CD8-positive, alpha-beta memory T cell (primary cell): ENCODE measurements at regions of chr1 and their contacts with region 1.

Region 1: GRCh38 chr1:89632657-89633247 is at the start of gene LRRC8C:
- DNase-seq: peak; percentile 78 to 95 (median 90)
- H3K4me3 ChIP-seq: peak within 1 kb of the TSS; percentile 74
- H3K4me3 Mint-ChIP-seq: peak within 1 kb of the TSS; percentile 90 to 99 (median 96)
- H3K27ac ChIP-seq: peak within 1 kb of the TSS; percentile 86
- H3K27ac Mint-ChIP-seq: peak within 1 kb of the TSS; percentile 95 to 99 (median 98)
- H3K4me1 ChIP-seq: peaks cover 77% of the 10 kb centered on the region
- H3K4me1 Mint-ChIP-seq: peaks cover 72 to 85% (median 83%) of the 10 kb centered on the region in 3 donors
- H3K27me3 ChIP-seq: no peaks in the 10 kb centered on the region
- H3K27me3 Mint-ChIP-seq: peaks cover 0 to 3% of the 10 kb centered on the region in 2 donors
- total RNA-seq, gene LRRC8C: 61.4 to 63.5 TPM

Region 2: GRCh38 chr1:89598450-89599331 is 34.1 kb before region 1 on chr1:
- CTCF ChIA-PET with region 1: interaction called, 403 read pairs
- POLR2A ChIA-PET with region 1: interaction called, 3 read pairs
- DNase-seq: peak in 2 of 5 donors; percentile 28 to 38
- H3K4me3 ChIP-seq: no peak overlapping the region
- H3K4me3 Mint-ChIP-seq: no peak overlapping the region
- H3K27ac ChIP-seq: no peak overlapping the region
- H3K27ac Mint-ChIP-seq: peak overlapping the region in 6 of 8 donors; percentile 6 to 72 (median 22)
- H3K4me1 ChIP-seq: peaks cover 43% of the 10 kb centered on the region
- H3K4me1 Mint-ChIP-seq: peaks cover 48 to 80% (median 75%) of the 10 kb centered on the region in 3 donors
- H3K27me3 ChIP-seq: no peaks in the 10 kb centered on the region
- H3K27me3 Mint-ChIP-seq: no peaks in the 10 kb centered on the region

Region 3: DNA sequence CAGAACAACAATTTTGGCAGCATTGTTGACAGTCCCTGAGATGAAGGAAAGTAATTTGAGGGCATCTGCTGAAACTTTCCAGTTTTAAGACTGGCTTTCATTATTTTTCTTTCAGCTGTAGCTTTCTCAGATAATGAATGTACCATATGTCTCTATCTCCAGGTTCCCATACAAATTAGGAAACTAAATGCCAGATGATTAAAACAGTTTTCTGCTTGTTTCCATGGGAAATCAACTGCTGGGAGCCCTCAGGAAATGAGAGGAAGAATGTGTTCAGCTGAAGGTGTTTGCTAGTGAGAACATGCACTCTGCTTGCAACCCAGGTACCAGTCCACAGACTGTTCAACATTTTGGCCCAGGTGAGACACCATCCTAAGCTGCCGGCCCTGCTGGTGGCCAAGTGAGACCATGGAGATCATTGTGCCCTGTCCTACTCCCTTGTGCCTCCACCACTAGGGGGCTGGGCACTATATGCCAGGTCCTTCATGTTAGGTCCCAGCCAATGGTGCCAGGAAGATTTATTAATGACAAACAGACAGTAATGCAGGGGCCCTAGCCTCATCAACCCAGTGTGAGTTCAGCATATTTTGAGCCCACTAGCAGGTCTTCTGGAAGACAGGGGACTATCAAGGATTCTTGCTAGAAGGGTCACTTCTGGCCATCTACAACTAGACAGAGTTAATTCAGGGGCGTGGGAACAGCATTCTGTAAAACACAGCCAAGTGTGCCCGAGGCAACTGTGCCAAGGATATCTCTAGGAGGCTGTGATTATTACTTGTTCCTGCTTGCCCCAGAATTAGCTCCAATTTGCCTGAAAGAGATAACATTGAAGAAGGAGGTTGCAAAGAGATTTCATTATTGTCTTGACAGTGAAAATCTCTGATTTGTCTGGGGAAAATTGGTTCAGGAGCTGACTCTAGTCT is 16.8 kb before region 1 on chr1:
- CTCF ChIA-PET with region 1: interaction called, 403 read pairs
- POLR2A ChIA-PET with region 1: interaction called, 90 read pairs
- DNase-seq: peak in 2 of 5 donors; percentile 13 to 48
- H3K4me3 ChIP-seq: no peak overlapping the region
- H3K4me3 Mint-ChIP-seq: no peak overlapping the region
- H3K27ac ChIP-seq: no peak overlapping the region
- H3K27ac Mint-ChIP-seq: no peak overlapping the region
- H3K4me1 ChIP-seq: peaks cover 38% of the 10 kb centered on the region
- H3K4me1 Mint-ChIP-seq: peaks cover 47 to 86% (median 85%) of the 10 kb centered on the region in 3 donors
- H3K27me3 ChIP-seq: no peaks in the 10 kb centered on the region
- H3K27me3 Mint-ChIP-seq: no peaks in the 10 kb centered on the region

Region 4: GRCh38 chr1:89657886-89658285 is 25.1 kb after region 1 on chr1:
- CTCF ChIA-PET with region 1: interaction called, 20 read pairs
- POLR2A ChIA-PET with region 1: interaction called, 6 read pairs
- DNase-seq: peak in 3 of 5 donors; percentile 52 to 80 (median 74)
- H3K4me3 ChIP-seq: no peak overlapping the region
- H3K4me3 Mint-ChIP-seq: peak overlapping the region; percentile 40 to 85 (median 52)
- H3K27ac ChIP-seq: no peak overlapping the region
- H3K27ac Mint-ChIP-seq: peak overlapping the region; percentile 78 to 97 (median 88)
- H3K4me1 ChIP-seq: peaks cover 75% of the 10 kb centered on the region
- H3K4me1 Mint-ChIP-seq: peaks cover 91 to 100% (median 99%) of the 10 kb centered on the region in 3 donors
- H3K27me3 ChIP-seq: no peaks in the 10 kb centered on the region
- H3K27me3 Mint-ChIP-seq: no peaks in the 10 kb centered on the region

Region 5: DNA sequence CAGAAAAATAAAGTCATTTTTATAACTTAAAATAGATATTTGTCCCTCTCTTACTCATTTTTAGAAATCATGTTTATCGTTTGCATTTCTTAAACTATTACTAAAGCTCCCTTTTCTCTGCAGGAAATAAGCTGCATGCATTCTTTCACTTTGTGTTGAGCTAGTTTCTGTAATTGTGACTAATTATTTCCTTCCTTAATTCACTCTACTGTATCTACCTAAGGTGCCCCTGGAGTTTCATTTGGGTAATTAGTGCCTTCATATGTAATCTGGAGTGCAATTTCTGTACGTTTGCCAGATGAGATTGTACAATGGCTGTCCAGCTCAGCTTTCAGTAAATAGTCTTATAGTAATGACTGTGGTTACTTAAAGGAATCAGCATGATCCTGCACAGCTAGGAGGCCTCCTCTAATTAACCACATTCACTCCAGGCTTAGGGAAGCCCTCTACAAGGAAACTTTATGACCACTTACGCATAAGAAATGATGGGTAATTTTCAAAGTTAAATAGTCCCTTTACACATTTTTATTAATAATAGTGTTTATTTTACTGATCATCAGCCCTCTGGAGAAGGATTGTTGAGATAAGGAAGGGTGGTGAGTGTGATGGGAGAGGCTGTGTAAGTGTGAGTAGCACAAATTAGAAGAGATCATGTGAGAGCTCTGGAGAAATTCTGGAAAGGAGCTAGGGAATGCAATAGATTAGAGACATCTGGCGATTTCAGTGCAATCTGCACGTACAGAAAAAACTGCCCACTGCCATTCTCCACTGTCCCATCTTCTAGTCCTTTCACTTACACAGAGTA is 87.0 kb after region 1 on chr1:
- CTCF ChIA-PET with region 1: interaction called, 35 read pairs
- POLR2A ChIA-PET with region 1: no interaction called
- DNase-seq: peak in 1 of 5 donors; percentile 43
- H3K4me3 ChIP-seq: no peak overlapping the region
- H3K4me3 Mint-ChIP-seq: peak overlapping the region; percentile 43 to 76 (median 68)
- H3K27ac ChIP-seq: peak overlapping the region; percentile 28
- H3K27ac Mint-ChIP-seq: peak overlapping the region; percentile 68 to 97 (median 93)
- H3K4me1 ChIP-seq: peaks cover 53% of the 10 kb centered on the region
- H3K4me1 Mint-ChIP-seq: peaks cover 77 to 94% (median 94%) of the 10 kb centered on the region in 3 donors
- H3K27me3 ChIP-seq: no peaks in the 10 kb centered on the region
- H3K27me3 Mint-ChIP-seq: no peaks in the 10 kb centered on the region

Region 6: GRCh38 chr1:89757532-89757931 is 124.8 kb after region 1 on chr1:
- CTCF ChIA-PET with region 1: interaction called, 134 read pairs
- POLR2A ChIA-PET with region 1: interaction called, 32 read pairs
- DNase-seq: peak in 3 of 5 donors; percentile 31 to 59 (median 50)
- H3K4me3 ChIP-seq: peak overlapping the region; percentile 12
- H3K4me3 Mint-ChIP-seq: peak overlapping the region; percentile 42 to 83 (median 79)
- H3K27ac ChIP-seq: no peak overlapping the region
- H3K27ac Mint-ChIP-seq: peak overlapping the region; percentile 76 to 99 (median 91)
- H3K4me1 ChIP-seq: peaks cover 81% of the 10 kb centered on the region
- H3K4me1 Mint-ChIP-seq: peaks cover 82 to 90% (median 89%) of the 10 kb centered on the region in 3 donors
- H3K27me3 ChIP-seq: no peaks in the 10 kb centered on the region
- H3K27me3 Mint-ChIP-seq: no peaks in the 10 kb centered on the region

Region 7: DNA sequence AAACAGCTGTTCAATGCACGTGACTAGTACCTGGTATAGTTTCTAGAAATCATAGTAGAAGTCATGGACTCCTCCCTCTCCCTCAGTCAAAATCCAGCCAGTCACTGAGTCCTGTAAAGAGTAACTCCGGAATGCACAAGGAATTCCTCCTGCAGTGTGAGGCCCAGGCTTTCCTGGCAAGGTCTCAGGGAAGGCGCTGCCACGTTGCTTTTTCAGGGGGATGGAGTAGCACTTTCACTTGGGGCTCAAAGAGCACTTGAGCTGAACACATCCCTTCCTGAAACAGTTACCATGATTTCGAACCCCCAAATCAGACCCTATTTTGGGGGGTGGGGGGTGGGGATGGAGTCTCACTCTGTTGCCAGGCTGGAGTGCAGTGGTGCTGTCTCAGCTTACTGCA is 161.7 kb after region 1 on chr1:
- CTCF ChIA-PET with region 1: no interaction called
- POLR2A ChIA-PET with region 1: no interaction called
- DNase-seq: no peak
- H3K4me3 ChIP-seq: no peak overlapping the region
- H3K4me3 Mint-ChIP-seq: no peak overlapping the region
- H3K27ac ChIP-seq: no peak overlapping the region
- H3K27ac Mint-ChIP-seq: no peak overlapping the region
- H3K4me1 ChIP-seq: no peaks in the 10 kb centered on the region
- H3K4me1 Mint-ChIP-seq: no peaks in the 10 kb centered on the region
- H3K27me3 ChIP-seq: no peaks in the 10 kb centered on the region
- H3K27me3 Mint-ChIP-seq: no peaks in the 10 kb centered on the region